T-cell (primary cell): ENCODE measurements at regions of chr1 and their contacts with region 1.

Region 1: DNA sequence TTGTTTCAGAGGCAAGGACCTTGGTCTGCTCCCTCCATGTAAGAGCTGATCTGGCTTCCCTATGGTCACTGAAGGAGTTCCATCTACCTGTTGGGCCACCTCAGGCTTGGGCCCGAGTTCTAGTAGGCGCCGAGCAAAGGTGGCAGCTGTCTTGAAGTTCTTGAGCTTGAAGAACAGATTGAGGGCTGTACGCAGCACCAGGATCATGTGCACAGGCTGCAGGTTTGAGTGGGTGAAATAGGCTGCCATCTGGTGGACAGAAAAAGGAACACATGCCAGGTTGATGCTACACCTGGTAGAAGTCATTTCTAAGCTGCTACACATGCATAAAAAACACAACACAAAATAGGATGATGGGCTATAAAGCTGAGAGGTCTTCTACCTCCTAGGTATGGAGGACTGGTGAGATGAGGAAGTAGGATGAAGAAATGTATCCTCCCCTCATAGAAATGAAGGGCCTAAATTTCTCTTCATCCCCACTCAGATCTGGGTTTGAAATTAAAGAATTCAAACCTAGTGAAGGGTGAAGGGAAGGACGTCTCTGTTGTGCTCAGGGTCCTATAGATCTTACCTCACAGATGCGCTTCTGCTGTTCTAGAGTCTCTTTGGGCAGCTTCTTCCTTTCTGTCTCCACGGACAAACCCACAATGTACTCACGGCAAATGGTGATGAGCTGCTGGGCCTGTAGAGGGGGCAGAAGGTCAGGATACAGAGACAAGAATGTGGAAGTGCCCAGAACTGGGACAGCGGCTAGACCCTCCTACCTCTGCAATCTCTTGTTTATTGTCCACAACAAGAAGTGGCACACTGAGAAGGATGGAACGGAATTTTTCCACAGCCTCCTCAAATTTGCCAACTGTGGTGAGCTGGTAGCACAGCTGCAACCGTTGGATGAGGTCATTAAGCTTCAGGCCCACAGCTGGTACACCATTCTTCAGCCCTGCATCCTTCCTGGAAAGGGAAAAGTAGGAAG is 6.6 kb upstream of the PEX19 start:
- DNase-seq: peak; percentile 27 to 87 (median 63)
- ATAC-seq: peak; percentile 95 to 97 (median 96)
- H3K4me3 ChIP-seq: no peak overlapping the region
- H3K4me3 Mint-ChIP-seq: no peak overlapping the region
- H3K27ac ChIP-seq: no peak overlapping the region
- H3K27ac Mint-ChIP-seq: peak overlapping the region; percentile 5 to 40
- H3K4me1 ChIP-seq: peaks cover 0 to 3% of the 10 kb centered on the region in 2 experiments
- H3K4me1 Mint-ChIP-seq: peaks cover 0 to 5% (median 2%) of the 10 kb centered on the region in 3 donors
- H3K27me3 ChIP-seq: no peaks in the 10 kb centered on the region
- H3K27me3 Mint-ChIP-seq: no peaks in the 10 kb centered on the region

Region 2: GRCh38 chr1:160085686-160086455 is 205.7 kb before region 1 on chr1:
- CTCF ChIA-PET with region 1: interaction called, 4 to 21 read pairs
- POLR2A ChIA-PET with region 1: no interaction called
- DNase-seq: peak; percentile 46 to 87 (median 71)
- ATAC-seq: peak; percentile 51 to 71 (median 62)
- H3K4me3 ChIP-seq: no peak overlapping the region
- H3K4me3 Mint-ChIP-seq: peak overlapping the region in 1 of 3 donors; percentile 24
- H3K27ac ChIP-seq: no peak overlapping the region
- H3K27ac Mint-ChIP-seq: peak overlapping the region in 1 of 2 donors; percentile 48
- H3K4me1 ChIP-seq: peaks cover 0 to 16% of the 10 kb centered on the region in 2 experiments
- H3K4me1 Mint-ChIP-seq: peaks cover 14 to 22% (median 19%) of the 10 kb centered on the region in 3 donors
- H3K27me3 ChIP-seq: peaks cover 6 to 29% of the 10 kb centered on the region in 2 experiments
- H3K27me3 Mint-ChIP-seq: peaks cover 8 to 20% of the 10 kb centered on the region in 2 donors

Region 3: DNA sequence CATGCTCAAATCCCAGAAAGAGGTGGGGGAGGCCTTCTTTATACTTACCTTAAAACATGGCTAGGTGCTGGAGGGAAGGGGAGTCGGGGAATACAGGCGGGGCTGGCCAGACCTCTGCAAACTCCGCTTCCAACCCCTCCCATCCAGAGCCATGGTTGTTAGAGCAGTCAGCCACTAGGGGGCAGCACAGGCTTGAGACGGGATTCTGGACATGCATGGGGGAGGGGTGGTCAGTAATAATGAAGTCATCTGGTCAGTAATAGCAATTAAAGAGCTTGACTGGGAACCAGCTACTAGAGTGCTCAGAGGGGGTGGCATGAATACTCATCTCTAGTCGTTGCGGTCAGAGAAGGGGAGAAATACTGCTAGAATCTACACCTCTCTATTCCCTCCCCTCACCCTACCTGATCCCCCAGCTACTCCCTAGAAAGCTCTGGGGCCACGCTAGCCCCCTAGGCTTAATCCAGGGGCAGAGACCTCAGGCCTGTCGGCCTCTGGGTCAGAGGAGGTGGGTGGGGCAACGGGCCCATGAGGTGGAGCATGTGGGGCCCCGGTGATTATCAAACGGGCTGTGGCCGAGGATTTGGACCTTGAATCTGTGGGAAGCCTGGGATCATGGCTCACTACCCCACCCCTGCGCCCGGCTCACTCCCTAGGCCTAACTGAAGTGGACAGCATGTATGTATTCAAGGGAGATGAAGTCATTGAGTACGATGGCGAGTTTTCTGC is 98.3 kb before region 1 on chr1:
- CTCF ChIA-PET with region 1: interaction called, 33 to 36 read pairs
- POLR2A ChIA-PET with region 1: no interaction called
- DNase-seq: peak; percentile 35 to 86 (median 71)
- ATAC-seq: peak; percentile 80 to 89 (median 85)
- H3K4me3 ChIP-seq: no peak overlapping the region
- H3K4me3 Mint-ChIP-seq: no peak overlapping the region
- H3K27ac ChIP-seq: no peak overlapping the region
- H3K27ac Mint-ChIP-seq: no peak overlapping the region
- H3K4me1 ChIP-seq: peaks cover 0 to 8% of the 10 kb centered on the region in 2 experiments
- H3K4me1 Mint-ChIP-seq: no peaks in the 10 kb centered on the region
- H3K27me3 ChIP-seq: peaks cover 0 to 16% of the 10 kb centered on the region in 2 experiments
- H3K27me3 Mint-ChIP-seq: no peaks in the 10 kb centered on the region

Region 4: DNA sequence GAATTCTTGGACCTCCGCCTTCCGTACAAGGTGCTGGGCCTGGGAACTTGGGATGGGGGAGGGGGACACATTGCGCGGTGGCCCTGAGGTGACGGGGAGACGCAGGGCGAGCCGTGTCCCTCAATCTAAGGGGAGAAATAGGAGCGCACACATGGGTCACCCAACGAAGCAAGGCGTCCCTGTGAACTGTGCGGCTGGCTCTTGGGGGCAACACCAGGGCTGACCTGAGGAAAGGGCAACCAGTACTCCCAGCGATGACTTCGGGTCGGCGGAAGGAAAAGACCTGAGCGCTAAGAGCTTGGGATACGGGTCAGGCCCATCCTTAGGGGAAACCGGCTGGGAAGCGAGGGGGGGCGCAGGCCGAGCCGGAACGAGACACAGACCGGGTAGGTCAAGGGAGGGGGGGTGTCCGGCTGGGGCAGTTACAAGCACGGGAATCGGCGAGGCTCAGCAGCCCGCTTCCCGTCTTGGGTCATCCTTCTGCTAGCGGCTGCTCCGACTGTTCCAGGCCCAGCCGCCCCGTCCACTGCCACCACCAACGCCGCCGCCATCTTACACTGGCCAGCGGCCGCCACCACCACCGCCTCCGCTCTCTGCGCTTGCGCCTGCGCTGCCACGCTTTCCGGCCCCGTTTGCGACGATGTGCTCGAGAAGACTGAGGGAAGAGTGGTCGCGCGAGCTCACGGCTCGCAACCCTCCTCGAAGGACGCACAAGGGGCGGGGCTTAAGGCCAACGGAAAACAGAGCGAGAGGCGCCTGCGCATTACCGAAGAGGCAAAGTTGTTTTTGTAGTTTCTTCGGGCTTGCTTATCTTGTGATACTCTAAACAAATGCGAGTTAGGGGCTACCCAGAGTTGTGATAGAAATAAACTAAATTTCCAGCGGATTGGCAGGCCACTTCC is 29.4 kb before region 1 on chr1 and contains the start of gene DCAF8:
- CTCF ChIA-PET with region 1: interaction called, 4 to 43 read pairs
- POLR2A ChIA-PET with region 1: interaction called in 1 of 2 experiments, 8 read pairs
- DNase-seq: peak; percentile 95 to 100 (median 98)
- ATAC-seq: peak; percentile 88 to 93 (median 92)
- H3K4me3 ChIP-seq: peak within 1 kb of the TSS; percentile 99
- H3K4me3 Mint-ChIP-seq: peak within 1 kb of the TSS; percentile 97 to 98 (median 97)
- H3K27ac ChIP-seq: peak within 1 kb of the TSS; percentile 99
- H3K27ac Mint-ChIP-seq: peak within 1 kb of the TSS; percentile 98 to 100
- H3K4me1 ChIP-seq: peaks cover 16 to 27% of the 10 kb centered on the region in 2 experiments
- H3K4me1 Mint-ChIP-seq: peaks cover 46 to 53% (median 50%) of the 10 kb centered on the region in 3 donors
- H3K27me3 ChIP-seq: no peaks in the 10 kb centered on the region
- H3K27me3 Mint-ChIP-seq: no peaks in the 10 kb centered on the region
- total RNA-seq, gene DCAF8: 173 to 221 (median 209) TPM